Heart right ventricle (tissue), 16 donors: ENCODE measurements at regions of chr22 and their contacts with region 1.

Region 1: GRCh38 chr22:46415776-46416519 is 80.4 kb downstream of the TRMU start:
- DNase-seq: no peak
- ATAC-seq: no peak
- H3K4me3 ChIP-seq: no peak overlapping the region
- H3K27ac ChIP-seq: no peak overlapping the region
- H3K4me1 ChIP-seq: peaks cover 10 to 22% (median 17%) of the 10 kb centered on the region in 9 donors
- H3K27me3 ChIP-seq: peaks cover 0 to 19% (median 0%) of the 10 kb centered on the region in 7 donors
- CTCF ChIP-seq: no peak

Region 2: DNA sequence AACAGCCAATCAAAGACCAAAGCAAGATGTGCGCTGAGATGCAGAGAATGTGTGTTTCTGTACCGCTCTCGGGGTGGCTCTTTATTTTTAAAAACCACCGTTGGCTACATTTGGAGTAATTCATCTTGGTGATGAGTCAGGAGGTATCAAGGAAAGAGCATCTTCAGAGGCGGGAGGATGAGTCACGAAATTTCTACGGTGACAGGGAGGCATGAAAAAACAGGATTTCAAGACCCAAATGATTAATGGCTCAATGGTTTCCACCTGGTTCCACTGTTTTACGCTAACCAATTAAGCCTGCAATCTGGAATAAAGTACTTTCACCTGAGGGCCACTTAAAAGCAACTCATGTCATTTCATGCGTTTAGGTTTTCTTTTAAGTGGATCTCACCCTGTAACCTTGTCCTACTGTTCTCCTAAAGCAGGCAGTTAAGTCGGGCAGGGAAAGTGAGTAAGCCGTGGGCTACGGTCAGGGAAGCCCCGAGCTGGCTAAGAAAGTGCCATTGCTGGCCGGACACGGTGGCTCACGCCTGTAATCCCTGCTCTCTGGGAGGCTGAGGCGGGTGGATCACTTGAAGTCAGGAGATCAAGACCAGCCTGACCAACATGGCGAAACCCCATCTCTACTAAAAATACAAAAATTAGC is 46.9 kb after region 1 on chr22:
- intact Hi-C with region 1: no loop called
- DNase-seq: no peak
- ATAC-seq: no peak
- H3K4me3 ChIP-seq: no peak overlapping the region
- H3K27ac ChIP-seq: no peak overlapping the region
- H3K4me1 ChIP-seq: peaks cover 0 to 9% (median 0%) of the 10 kb centered on the region in 9 donors
- H3K27me3 ChIP-seq: peaks cover 0 to 10% (median 2%) of the 10 kb centered on the region in 7 donors
- CTCF ChIP-seq: no peak

Region 3: DNA sequence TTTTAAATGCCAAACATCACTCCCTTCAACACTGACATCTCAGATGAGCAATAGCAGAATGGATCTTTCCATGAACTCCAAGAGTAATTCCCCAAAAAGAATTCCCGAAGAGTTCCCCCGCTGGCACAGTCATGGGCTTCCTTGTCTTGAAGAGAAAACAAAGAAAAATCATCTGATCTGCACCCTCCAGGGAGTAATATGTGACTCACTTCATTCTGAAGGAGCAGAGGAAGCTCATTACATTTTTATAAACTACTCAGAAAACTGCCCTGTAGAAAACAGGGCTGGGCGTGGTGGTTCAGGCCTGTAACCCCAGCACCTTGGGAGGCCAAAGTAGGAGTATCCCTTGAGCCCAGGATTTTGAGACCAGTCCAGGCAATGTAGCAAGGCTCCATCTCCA is 85.8 kb after region 1 on chr22:
- intact Hi-C with region 1: loop called in 1 of 10 experiments (anchors 10 kb)
- DNase-seq: no peak
- ATAC-seq: no peak
- H3K4me3 ChIP-seq: no peak overlapping the region
- H3K27ac ChIP-seq: no peak overlapping the region
- H3K4me1 ChIP-seq: peaks cover 0 to 3% (median 0%) of the 10 kb centered on the region in 9 donors
- H3K27me3 ChIP-seq: peaks cover 0 to 27% (median 0%) of the 10 kb centered on the region in 7 donors
- CTCF ChIP-seq: no peak

Region 4: DNA sequence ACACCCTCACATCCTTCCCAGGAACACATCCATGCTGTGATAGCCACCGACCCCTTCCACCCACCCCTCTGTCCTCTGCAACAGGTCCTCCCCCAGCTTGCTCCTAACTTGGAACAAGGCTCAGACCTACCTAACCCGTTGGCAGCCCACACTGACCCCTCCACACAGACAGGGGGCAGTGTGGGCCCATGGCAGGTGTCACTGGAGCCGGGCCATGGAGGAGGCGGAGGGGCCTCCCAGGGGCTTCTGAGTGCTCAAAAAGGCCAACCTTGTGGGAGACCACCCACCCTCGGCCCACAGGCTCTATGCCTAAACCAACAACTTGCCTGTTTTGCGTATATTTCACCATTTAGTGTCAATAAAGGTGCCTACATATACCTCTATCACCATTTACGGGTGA is 265.1 kb after region 1 on chr22:
- intact Hi-C with region 1: no loop called
- DNase-seq: no peak
- ATAC-seq: no peak
- H3K4me3 ChIP-seq: no peak overlapping the region
- H3K27ac ChIP-seq: no peak overlapping the region
- H3K4me1 ChIP-seq: peaks cover 9 to 70% (median 47%) of the 10 kb centered on the region in 9 donors
- H3K27me3 ChIP-seq: no peaks in the 10 kb centered on the region
- CTCF ChIP-seq: peak in 7 of 9 donors; percentile 17 to 45 (median 24)